ENCODE measurements at regions of chr2 and their contacts with region 1.

Region 1: GRCh38 chr2:196205881-196206435 is 34.6 kb upstream of the STK17B start:
- DNase-seq: no peak
- H3K4me3 Mint-ChIP-seq: no peak overlapping the region
- H3K27ac Mint-ChIP-seq: peak overlapping the region; percentile 7
- H3K4me1 Mint-ChIP-seq: peaks cover 31% of the 10 kb centered on the region
- H3K27me3 Mint-ChIP-seq: no peaks in the 10 kb centered on the region

Region 2: GRCh38 chr2:195706161-195706900 is 499.6 kb before region 1 on chr2:
- CTCF ChIA-PET with region 1: no interaction called
- POLR2A ChIA-PET with region 1: no interaction called
- intact Hi-C with region 1: no loop called
- DNase-seq: no peak
- H3K4me3 Mint-ChIP-seq: no peak overlapping the region
- H3K27ac Mint-ChIP-seq: no peak overlapping the region
- H3K4me1 Mint-ChIP-seq: no peaks in the 10 kb centered on the region
- H3K27me3 Mint-ChIP-seq: no peaks in the 10 kb centered on the region

Region 3: DNA sequence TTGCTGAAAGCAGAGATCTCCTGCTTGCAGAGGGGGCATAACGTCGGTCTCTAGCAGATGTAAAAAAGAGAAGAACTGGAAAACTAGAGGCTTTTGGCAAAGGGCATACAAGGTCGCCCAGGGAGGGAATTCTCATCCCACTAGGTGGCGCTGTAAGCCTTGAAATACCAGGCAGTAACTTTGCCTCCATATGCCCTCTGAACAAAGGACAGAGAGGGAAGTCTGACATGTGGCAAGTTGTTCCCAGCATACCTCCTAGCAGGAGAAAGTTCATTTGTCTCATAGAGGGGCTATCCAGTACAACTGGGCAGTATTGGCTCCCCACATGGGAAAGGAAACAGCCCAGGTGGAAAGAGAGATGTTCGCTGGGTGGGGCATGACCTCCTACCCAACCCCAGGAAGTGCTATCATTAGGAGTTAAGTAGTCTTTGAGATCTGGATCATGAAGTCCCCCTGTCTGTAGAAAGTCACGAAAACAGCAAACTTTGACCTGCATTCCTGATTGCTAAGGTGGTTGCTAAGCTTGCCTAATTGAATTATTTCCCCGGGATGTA is 74.5 kb before region 1 on chr2:
- CTCF ChIA-PET with region 1: no interaction called
- POLR2A ChIA-PET with region 1: no interaction called
- intact Hi-C with region 1: loop called (anchors 2 kb)
- DNase-seq: peak; percentile 75
- H3K4me3 Mint-ChIP-seq: no peak overlapping the region
- H3K27ac Mint-ChIP-seq: peak overlapping the region; percentile 79
- H3K4me1 Mint-ChIP-seq: peaks cover 12% of the 10 kb centered on the region
- H3K27me3 Mint-ChIP-seq: no peaks in the 10 kb centered on the region

Region 4: DNA sequence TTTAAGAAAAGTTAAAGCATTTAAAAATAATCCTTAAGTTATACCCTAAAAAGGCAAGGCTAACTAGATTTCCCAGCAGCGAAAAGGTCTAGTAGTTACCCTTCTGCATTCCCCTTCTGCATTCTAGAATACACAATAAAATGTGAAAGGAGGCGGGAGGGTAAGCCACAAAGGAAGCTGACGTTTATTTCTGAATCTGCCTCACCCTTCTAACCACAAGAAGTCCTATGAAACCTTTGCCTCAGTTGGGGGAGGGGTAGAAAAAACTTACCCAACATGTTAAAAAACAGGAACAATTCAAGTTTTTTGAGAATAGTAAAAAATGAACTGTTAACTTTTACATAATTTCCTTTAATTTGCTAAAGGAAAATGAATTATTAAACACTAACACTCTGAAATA is 45.9 kb before region 1 on chr2:
- CTCF ChIA-PET with region 1: interaction called, 3 read pairs
- POLR2A ChIA-PET with region 1: no interaction called
- intact Hi-C with region 1: loop called (anchors 1 kb)
- DNase-seq: peak; percentile 76
- H3K4me3 Mint-ChIP-seq: peak overlapping the region; percentile 39
- H3K27ac Mint-ChIP-seq: peak overlapping the region; percentile 96
- H3K4me1 Mint-ChIP-seq: peaks cover 77% of the 10 kb centered on the region
- H3K27me3 Mint-ChIP-seq: no peaks in the 10 kb centered on the region

Region 5: GRCh38 chr2:196182439-196183171 is 23.4 kb before region 1 on chr2:
- CTCF ChIA-PET with region 1: interaction called, 8 read pairs
- POLR2A ChIA-PET with region 1: interaction called, 5 read pairs
- intact Hi-C with region 1: loop called (anchors 1 kb)
- DNase-seq: no peak
- H3K4me3 Mint-ChIP-seq: peak overlapping the region; percentile 75
- H3K27ac Mint-ChIP-seq: peak overlapping the region; percentile 88
- H3K4me1 Mint-ChIP-seq: peaks cover 77% of the 10 kb centered on the region
- H3K27me3 Mint-ChIP-seq: no peaks in the 10 kb centered on the region

Region 6: GRCh38 chr2:196220671-196221070 is 14.7 kb after region 1 on chr2:
- CTCF ChIA-PET with region 1: interaction called, 6 read pairs
- POLR2A ChIA-PET with region 1: no interaction called
- intact Hi-C with region 1: loop called (anchors 1 kb)
- DNase-seq: no peak
- H3K4me3 Mint-ChIP-seq: no peak overlapping the region
- H3K27ac Mint-ChIP-seq: no peak overlapping the region
- H3K4me1 Mint-ChIP-seq: peaks cover 60% of the 10 kb centered on the region
- H3K27me3 Mint-ChIP-seq: no peaks in the 10 kb centered on the region

Region 7: GRCh38 chr2:196233021-196233804 is 27.3 kb after region 1 on chr2:
- CTCF ChIA-PET with region 1: interaction called, 3 read pairs
- POLR2A ChIA-PET with region 1: interaction called, 3 read pairs
- intact Hi-C with region 1: loop called (anchors 1 kb)
- DNase-seq: no peak
- H3K4me3 Mint-ChIP-seq: peak overlapping the region; percentile 7
- H3K27ac Mint-ChIP-seq: peak overlapping the region; percentile 93
- H3K4me1 Mint-ChIP-seq: peaks cover 89% of the 10 kb centered on the region
- H3K27me3 Mint-ChIP-seq: no peaks in the 10 kb centered on the region

Region 8: GRCh38 chr2:196291183-196291825 is 85.3 kb after region 1 on chr2:
- CTCF ChIA-PET with region 1: no interaction called
- POLR2A ChIA-PET with region 1: no interaction called
- intact Hi-C with region 1: no loop called
- DNase-seq: no peak
- H3K4me3 Mint-ChIP-seq: no peak overlapping the region
- H3K27ac Mint-ChIP-seq: no peak overlapping the region
- H3K4me1 Mint-ChIP-seq: peaks cover 51% of the 10 kb centered on the region
- H3K27me3 Mint-ChIP-seq: no peaks in the 10 kb centered on the region

Region 9: DNA sequence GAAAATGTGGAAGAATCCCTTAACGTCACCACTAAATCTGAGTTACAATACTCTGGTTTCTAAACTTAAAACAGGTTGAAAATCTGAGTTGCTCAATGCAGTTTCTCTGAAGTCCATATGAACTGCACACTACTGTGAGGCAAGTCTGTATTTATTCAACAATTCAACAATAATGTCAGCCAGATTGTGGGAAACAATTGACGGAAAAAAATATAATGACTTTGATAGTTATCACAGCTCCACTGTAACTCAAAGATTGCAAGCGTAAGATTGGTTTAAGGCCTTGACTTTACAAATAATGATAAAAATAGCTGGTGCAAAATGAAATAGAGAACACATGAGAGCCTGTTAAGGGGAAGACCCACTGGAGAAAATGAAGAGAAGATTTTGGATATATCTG is 214.2 kb after region 1 on chr2:
- CTCF ChIA-PET with region 1: no interaction called
- POLR2A ChIA-PET with region 1: no interaction called
- intact Hi-C with region 1: no loop called
- DNase-seq: no peak
- H3K4me3 Mint-ChIP-seq: no peak overlapping the region
- H3K27ac Mint-ChIP-seq: no peak overlapping the region
- H3K4me1 Mint-ChIP-seq: peaks cover 6% of the 10 kb centered on the region
- H3K27me3 Mint-ChIP-seq: peaks cover 2% of the 10 kb centered on the region

Measured in activated CD4-positive, alpha-beta memory T cell treated with anti-CD3 and anti-CD28 coated beads for 36 hours (primary cell).